Natural killer cell (primary cell): ENCODE measurements at regions of chr22 and their contacts with region 1.

Region 1: DNA sequence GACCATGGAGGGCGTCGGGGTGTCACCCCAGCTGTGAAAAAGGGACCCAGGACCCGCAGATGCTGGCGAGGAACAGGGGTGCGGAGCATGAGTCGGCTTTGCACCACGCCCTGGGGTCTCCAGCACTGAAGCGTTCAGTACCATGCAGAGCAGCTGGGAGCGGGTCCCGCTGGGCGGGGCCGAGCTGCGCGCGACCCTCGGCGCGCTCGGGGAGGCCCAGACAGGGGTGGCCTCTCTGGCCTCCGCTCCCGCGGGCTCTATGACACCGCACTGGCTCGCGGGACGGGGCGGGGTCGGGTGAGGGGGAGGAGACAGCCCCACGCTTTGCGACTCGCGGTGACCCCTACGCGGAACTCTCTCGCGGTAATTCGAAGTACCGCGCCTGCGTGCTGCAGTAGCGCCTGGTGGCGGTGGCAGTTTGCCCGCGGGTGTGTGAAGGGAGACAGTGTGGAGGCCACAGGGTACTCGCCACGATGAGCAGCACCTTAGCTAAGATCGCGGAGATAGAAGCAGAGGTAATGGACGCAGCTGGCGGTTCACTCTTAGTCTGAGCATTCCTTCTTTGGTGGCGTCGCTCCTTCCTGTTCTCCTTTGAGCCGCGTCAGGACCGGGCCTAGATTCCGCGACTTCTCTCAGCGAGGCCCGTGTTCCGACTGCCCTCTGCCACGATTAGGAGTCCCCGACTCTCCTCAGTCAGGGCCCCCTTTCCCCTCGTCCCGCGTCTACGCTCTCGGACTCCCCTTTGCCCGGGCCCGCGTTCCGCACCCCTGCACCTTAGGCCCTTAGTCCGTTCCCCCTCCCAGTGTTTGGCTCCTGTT is at the start of gene DRG1:
- DNase-seq: peak; percentile 94 to 98
- ATAC-seq: peak; percentile 96 to 99 (median 97)
- H3K4me3 ChIP-seq: peak within 1 kb of the TSS; percentile 78
- H3K4me3 Mint-ChIP-seq: peak within 1 kb of the TSS; percentile 93
- H3K27ac ChIP-seq: peak within 1 kb of the TSS; percentile 79
- H3K27ac Mint-ChIP-seq: peak within 1 kb of the TSS; percentile 91 to 98
- H3K4me1 ChIP-seq: peaks cover 16% of the 10 kb centered on the region
- H3K4me1 Mint-ChIP-seq: peaks cover 15 to 16% of the 10 kb centered on the region in 2 donors
- H3K27me3 ChIP-seq: no peaks in the 10 kb centered on the region
- H3K27me3 Mint-ChIP-seq: no peaks in the 10 kb centered on the region
- CTCF ChIP-seq: no peak
- total RNA-seq, gene DRG1: 50.2 to 60.3 (median 55.4) TPM

Region 2: DNA sequence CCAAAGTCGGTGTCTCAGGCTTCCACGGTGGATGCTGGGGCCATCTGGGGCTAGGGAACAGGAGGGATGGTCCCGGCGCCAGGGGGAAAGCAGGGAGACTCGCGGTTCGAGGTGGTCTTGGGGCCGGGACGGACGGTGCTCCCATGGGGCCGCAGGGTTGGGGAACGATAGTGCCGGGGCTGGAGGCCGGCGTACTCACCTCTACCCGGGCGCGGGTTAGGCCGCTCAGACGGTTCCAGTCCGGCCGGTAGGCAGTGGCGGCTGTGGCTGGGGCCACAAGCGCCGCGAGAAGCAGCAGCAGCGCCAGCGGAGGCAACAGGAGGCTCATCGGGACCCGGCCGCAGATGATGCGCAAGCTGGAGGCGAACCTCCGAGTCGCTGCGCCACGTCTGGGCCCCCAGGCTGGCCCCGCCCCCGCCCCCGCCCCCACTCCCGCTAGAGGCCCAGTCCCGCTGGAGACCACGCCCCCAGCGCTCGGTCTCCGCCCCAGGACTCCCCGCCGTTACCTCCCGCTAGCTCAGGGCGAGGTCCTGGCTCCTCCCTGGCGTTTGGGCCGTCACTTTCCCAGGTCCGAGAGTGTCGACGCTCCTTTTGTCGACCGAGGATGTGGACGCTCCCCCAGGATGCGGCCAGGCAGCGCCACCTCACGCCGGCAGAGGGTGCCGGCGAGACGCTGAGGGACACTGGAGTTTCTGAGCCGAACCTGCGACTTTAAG is 292.1 kb before region 1 on chr22 and contains the start of gene SELENOM:
- intact Hi-C with region 1: no loop called
- DNase-seq: peak; percentile 80 to 94
- ATAC-seq: peak; percentile 94 to 96 (median 96)
- H3K4me3 ChIP-seq: peak within 1 kb of the TSS; percentile 86
- H3K4me3 Mint-ChIP-seq: peak within 1 kb of the TSS; percentile 87
- H3K27ac ChIP-seq: peak within 1 kb of the TSS; percentile 34
- H3K27ac Mint-ChIP-seq: peak within 1 kb of the TSS; percentile 78 to 91
- H3K4me1 ChIP-seq: peaks cover 17% of the 10 kb centered on the region
- H3K4me1 Mint-ChIP-seq: peaks cover 7 to 18% of the 10 kb centered on the region in 2 donors
- H3K27me3 ChIP-seq: no peaks in the 10 kb centered on the region
- H3K27me3 Mint-ChIP-seq: peaks cover 0 to 2% of the 10 kb centered on the region in 2 donors
- CTCF ChIP-seq: peak; percentile 74
- total RNA-seq, gene SELENOM: 8.1 to 14.0 (median 10.6) TPM

Region 3: DNA sequence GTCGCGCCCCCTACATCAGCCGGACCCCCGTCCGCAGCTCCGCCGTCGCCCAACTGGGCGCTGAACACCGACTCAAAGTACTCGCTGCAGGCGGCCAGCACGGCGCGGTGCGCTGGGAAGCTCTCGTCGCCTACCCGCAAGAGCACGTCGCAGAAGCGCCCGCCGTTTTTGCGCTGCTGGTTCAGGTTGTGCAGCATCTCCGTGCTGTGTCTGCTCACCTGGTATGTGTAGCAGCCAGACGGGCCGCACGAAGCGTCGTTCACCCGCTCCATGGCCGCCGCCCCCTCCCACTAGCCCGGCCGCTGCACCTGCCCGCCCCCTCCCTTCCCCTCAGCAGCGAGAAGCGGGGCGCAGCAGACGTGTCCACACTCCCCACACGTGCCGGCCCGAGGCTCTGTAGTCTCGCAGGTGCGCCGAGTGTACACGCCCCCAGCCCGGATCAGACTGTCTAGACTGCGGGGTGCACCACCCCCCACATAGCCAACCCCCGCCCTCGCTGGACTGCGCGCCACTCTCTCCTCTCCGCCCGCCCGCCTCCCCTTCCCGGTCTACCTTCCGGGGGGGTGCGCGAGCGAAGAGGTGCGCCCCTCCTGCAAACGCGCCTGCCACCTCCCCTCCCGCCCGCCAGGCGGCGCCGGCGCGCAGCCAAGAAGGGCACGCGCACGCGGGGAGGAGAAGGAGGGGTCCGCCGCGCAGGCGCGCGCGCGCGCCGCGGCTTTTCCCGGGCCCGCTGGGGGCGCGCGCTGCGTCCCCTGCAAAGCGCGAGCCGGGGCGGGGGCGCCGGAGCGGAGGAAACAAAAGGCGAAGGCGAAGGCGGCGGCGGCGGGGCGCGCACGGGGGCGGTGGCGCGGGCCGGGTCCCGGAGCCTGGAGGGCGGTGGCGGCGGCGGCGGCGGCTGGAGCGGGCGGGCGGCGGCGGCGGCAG is 53.8 kb before region 1 on chr22:
- intact Hi-C with region 1: loop called (anchors 1 kb)
- DNase-seq: peak; percentile 85 to 97
- ATAC-seq: peak; percentile 73 to 87 (median 77)
- H3K4me3 ChIP-seq: peak overlapping the region; percentile 72
- H3K4me3 Mint-ChIP-seq: peak overlapping the region; percentile 85
- H3K27ac ChIP-seq: peak overlapping the region; percentile 8
- H3K27ac Mint-ChIP-seq: peak overlapping the region; percentile 76 to 82
- H3K4me1 ChIP-seq: peaks cover 60% of the 10 kb centered on the region
- H3K4me1 Mint-ChIP-seq: peaks cover 48 to 51% of the 10 kb centered on the region in 2 donors
- H3K27me3 ChIP-seq: no peaks in the 10 kb centered on the region
- H3K27me3 Mint-ChIP-seq: no peaks in the 10 kb centered on the region
- CTCF ChIP-seq: peak; percentile 81